ENCODE measurements at regions of chr11 and their contacts with region 1.

Region 1: DNA sequence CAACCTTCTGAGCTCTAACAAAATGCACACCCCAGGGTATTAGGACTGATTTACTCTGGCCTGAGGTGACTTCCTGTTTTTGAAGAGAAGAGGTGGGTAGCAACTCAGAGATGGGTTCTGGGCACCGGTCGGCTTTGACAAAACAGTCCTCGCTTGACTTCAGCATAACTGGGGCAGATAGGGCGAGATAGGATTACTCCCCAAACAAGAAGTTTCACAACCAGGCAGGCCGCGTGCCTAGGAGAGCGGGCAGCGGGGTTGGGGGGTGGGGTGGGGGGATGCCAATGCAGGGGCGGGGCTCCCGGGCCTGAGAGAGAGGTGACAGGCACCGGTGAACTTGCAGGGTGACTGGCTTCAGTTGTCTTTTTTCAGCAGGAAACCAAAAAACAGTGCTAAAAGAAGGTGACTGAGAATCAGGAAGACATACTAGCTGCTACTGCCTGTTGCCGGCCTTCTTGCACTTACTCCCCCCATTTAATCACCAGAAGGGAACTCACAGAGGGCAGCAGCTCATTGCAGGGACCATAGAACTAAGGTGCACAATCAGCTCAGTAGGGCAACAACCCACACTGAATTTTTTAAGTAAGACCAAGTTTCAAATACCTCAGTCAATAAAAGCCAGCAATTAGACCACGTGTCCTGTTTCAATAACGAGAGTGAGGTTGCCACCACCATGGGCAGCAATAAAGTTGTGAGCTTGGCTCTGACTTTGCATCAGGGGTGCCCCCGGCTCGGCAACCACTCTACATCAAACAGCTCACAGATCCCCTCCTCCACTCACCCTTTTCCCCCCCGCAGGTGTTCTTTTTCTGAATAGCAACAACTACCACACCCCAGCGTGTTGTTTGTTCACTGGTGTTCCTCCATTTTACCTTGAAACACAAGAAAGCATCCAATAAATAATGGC is 37.2 kb upstream of the ETS1 start:
- DNase-seq: peak; percentile 38 to 89 (median 68)
- ATAC-seq: peak; percentile 69
- H3K4me3 ChIP-seq: peak overlapping the region; percentile 4
- H3K4me3 Mint-ChIP-seq: peak overlapping the region; percentile 80
- H3K27ac ChIP-seq: peak overlapping the region; percentile 78
- H3K27ac Mint-ChIP-seq: peak overlapping the region; percentile 97
- H3K4me1 ChIP-seq: peaks cover 88% of the 10 kb centered on the region
- H3K4me1 Mint-ChIP-seq: peaks cover 98% of the 10 kb centered on the region
- H3K27me3 ChIP-seq: no peaks in the 10 kb centered on the region
- H3K27me3 Mint-ChIP-seq: no peaks in the 10 kb centered on the region
- CTCF ChIP-seq: no peak

Region 2: GRCh38 chr11:128544471-128545051 is 80.0 kb before region 1 on chr11:
- CTCF ChIA-PET with region 1: no interaction called
- POLR2A ChIA-PET with region 1: interaction called, 13 read pairs
- intact Hi-C with region 1: no loop called
- DNase-seq: peak in 5 of 14 experiments; percentile 24 to 69 (median 39)
- ATAC-seq: peak; percentile 61
- H3K4me3 ChIP-seq: peak overlapping the region; percentile 4
- H3K4me3 Mint-ChIP-seq: peak overlapping the region; percentile 74
- H3K27ac ChIP-seq: no peak overlapping the region
- H3K27ac Mint-ChIP-seq: peak overlapping the region; percentile 94
- H3K4me1 ChIP-seq: peaks cover 31% of the 10 kb centered on the region
- H3K4me1 Mint-ChIP-seq: peaks cover 71% of the 10 kb centered on the region
- H3K27me3 ChIP-seq: no peaks in the 10 kb centered on the region
- H3K27me3 Mint-ChIP-seq: no peaks in the 10 kb centered on the region
- CTCF ChIP-seq: no peak

Region 3: GRCh38 chr11:128552783-128553661 is 71.5 kb before region 1 on chr11:
- CTCF ChIA-PET with region 1: interaction called, 3 read pairs
- POLR2A ChIA-PET with region 1: interaction called, 12 read pairs
- intact Hi-C with region 1: no loop called
- DNase-seq: peak in 4 of 14 experiments; percentile 35 to 72 (median 52)
- ATAC-seq: peak; percentile 20
- H3K4me3 ChIP-seq: peak overlapping the region; percentile 8
- H3K4me3 Mint-ChIP-seq: peak overlapping the region; percentile 54
- H3K27ac ChIP-seq: peak overlapping the region; percentile 5 to 50
- H3K27ac Mint-ChIP-seq: peak overlapping the region; percentile 94
- H3K4me1 ChIP-seq: peaks cover 60% of the 10 kb centered on the region
- H3K4me1 Mint-ChIP-seq: peaks cover 62% of the 10 kb centered on the region
- H3K27me3 ChIP-seq: no peaks in the 10 kb centered on the region
- H3K27me3 Mint-ChIP-seq: no peaks in the 10 kb centered on the region
- CTCF ChIP-seq: no peak

Region 4: GRCh38 chr11:128610721-128611617 is 13.6 kb before region 1 on chr11:
- CTCF ChIA-PET with region 1: interaction called, 4 read pairs
- POLR2A ChIA-PET with region 1: interaction called, 97 read pairs
- intact Hi-C with region 1: loop called in 1 of 2 experiments (anchors 2 kb)
- DNase-seq: peak; percentile 45 to 80 (median 66)
- ATAC-seq: peak; percentile 90
- H3K4me3 ChIP-seq: peak overlapping the region; percentile 12
- H3K4me3 Mint-ChIP-seq: peak overlapping the region; percentile 75
- H3K27ac ChIP-seq: peak overlapping the region; percentile 51 to 82
- H3K27ac Mint-ChIP-seq: peak overlapping the region; percentile 95
- H3K4me1 ChIP-seq: peaks cover 42% of the 10 kb centered on the region
- H3K4me1 Mint-ChIP-seq: peaks cover 78% of the 10 kb centered on the region
- H3K27me3 ChIP-seq: no peaks in the 10 kb centered on the region
- H3K27me3 Mint-ChIP-seq: no peaks in the 10 kb centered on the region
- CTCF ChIP-seq: no peak

Measured in CD4-positive, alpha-beta T cell (primary cell).